Right ventricle myocardium superior (tissue), 1 donor: ENCODE measurements at regions of chr6 and their contacts with region 1.

Region 1: DNA sequence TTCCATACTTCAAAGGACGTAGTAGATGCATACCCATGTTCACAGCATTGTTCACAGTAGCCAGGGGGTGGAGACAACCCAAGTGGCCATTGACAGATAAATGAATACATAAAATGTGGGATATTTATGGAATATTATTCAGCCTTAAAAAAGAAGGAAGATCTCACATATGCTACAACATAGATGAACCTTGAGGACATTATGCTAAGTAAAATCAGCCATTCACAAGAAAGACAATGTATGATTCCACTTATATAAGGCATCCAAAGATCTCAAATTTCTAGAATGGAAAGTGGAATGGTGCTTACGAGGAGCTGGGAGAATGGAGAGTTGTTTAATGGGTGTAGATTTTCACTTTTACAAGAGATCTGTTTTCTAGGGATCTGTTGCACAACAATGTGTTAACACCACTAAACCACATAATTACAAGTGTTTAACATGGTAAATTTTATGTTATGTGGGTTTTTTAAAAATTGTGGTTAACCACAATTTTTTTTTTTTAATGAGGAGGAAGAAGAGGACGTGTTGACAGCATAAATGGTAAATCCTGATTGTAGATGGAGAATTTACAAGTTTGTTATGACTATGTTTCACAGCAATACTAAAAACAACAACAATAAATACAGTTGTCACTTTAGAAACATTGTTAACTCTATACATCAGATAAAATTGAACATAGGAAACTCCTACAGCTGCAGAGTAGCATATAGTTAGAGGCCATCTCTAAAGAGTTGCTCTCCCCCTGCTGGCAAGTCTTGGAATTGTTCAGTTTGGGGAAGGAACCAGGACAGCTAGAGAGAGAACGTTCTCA is 41.6 kb downstream of the CCN2 start:
- DNase-seq: peak; percentile 49
- ATAC-seq: peak; percentile 82

Region 2: GRCh38 chr6:131694831-131695426 is 214.7 kb before region 1 on chr6:
- intact Hi-C with region 1: loop called (anchors 5 kb)
- DNase-seq: no peak
- ATAC-seq: peak; percentile 76

Region 3: DNA sequence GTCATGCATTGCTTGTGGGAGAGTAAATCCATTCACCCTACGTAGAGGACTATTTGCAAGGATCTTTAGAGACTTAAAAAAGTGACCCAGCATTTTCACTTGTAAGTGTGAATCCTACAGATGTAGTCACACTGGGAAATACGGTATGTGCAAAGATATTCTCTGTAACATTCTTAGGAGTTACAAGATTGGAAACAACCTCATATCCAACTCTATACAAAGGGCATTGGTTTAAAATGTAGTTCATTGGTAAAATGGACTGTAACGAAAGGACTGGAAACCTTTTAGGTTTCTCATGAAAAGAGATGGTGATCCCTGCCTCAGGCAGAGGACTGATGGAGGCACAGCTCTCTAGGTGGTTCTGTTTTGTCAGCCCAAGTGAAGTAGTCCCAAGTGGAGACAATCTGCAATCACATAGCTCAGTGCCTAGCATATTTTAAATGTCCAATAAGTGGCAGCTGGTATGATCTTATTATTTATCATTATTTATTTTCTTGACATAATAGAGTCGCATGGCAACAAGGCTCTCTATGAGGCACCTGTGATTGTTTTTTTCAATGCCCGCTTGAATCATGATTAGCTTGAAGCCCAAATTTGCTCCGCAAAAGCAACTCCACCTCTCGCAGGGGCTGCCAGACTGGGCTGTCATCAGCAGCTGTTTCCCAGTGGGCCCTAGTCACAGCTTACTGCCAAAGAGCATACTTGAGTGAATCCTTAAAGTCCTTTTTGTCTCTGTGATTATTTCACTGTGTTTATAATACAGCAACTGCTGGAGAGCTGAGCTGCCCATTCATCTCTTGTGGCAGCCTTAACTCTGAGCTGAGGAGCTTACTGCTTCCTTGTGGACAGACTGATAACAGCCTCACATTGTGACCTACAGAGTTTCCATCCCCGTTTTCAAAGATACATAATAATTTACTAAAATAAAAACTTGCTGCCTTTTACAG is 121.6 kb before region 1 on chr6:
- intact Hi-C with region 1: loop called (anchors 10 kb)
- DNase-seq: peak; percentile 50
- ATAC-seq: peak; percentile 41

Region 4: GRCh38 chr6:132007474-132008190 is 98.0 kb after region 1 on chr6:
- intact Hi-C with region 1: no loop called
- DNase-seq: no peak
- ATAC-seq: no peak